Calu3 (cell line): ENCODE measurements at regions of chr6 and their contacts with region 1.

Region 1: GRCh38 chr6:47242483-47243386 is 67.0 kb downstream of the TNFRSF21 start:
- DNase-seq: peak; percentile 93
- H3K4me3 Mint-ChIP-seq: peak overlapping the region; percentile 53
- H3K27ac Mint-ChIP-seq: peak overlapping the region; percentile 85
- H3K4me1 Mint-ChIP-seq: peaks cover 74% of the 10 kb centered on the region
- H3K27me3 Mint-ChIP-seq: no peaks in the 10 kb centered on the region
- CTCF ChIP-seq: no peak

Region 2: DNA sequence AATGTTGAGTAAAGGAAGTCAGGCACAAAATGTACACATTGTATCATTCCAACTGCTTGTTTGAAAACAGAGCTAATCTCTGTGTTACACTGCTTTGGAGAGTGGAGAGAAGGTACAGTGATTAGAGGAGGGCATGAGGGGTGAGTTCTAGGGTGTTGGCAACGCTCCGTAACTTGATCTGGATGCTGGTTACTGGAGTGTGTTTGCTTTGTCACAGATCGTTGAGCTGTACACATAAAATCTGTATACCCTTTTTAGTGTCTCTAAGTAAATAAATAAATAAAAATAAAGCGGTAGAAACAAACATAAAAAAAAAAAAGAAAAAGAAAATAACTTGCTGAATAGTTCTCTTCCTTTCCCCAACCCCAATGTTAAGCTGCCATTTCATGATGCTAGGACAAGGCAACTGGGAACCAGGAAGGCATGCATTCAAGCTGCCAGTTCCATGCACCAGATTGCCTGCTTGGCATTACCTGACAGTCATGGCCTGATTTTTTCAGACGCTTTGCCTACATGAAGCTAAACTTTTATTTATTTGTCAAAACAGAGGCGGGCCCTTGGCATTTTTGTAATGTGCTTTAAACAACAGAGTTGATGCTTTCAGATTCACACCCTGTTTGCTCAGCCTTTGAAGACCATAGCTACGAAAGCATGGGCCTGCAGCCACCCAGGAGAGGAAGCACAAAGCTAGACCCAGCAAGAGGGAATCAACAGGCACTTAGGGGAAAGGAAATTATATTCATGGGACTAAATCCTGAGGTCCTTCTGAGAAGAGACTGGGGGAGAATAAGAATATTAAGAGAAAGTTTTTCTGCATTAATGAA is 45.7 kb after region 1 on chr6:
- CTCF ChIA-PET with region 1: no interaction called
- intact Hi-C with region 1: no loop called
- DNase-seq: no peak
- H3K4me3 Mint-ChIP-seq: no peak overlapping the region
- H3K27ac Mint-ChIP-seq: no peak overlapping the region
- H3K4me1 Mint-ChIP-seq: peaks cover 75% of the 10 kb centered on the region
- H3K27me3 Mint-ChIP-seq: no peaks in the 10 kb centered on the region
- CTCF ChIP-seq: no peak

Region 3: GRCh38 chr6:47302043-47302442 is 59.3 kb after region 1 on chr6:
- CTCF ChIA-PET with region 1: interaction called, 3 read pairs
- intact Hi-C with region 1: loop called (anchors 5 kb)
- DNase-seq: no peak
- H3K4me3 Mint-ChIP-seq: peak overlapping the region; percentile 98
- H3K27ac Mint-ChIP-seq: no peak overlapping the region
- H3K4me1 Mint-ChIP-seq: peaks cover 79% of the 10 kb centered on the region
- H3K27me3 Mint-ChIP-seq: no peaks in the 10 kb centered on the region
- CTCF ChIP-seq: no peak